Mammary epithelial cell (primary cell): ENCODE measurements at regions of chr2 and their contacts with region 1.

Region 1: GRCh38 chr2:102240640-102241370 is 54.0 kb downstream of the IL1RL2 start:
- DNase-seq: peak; percentile 77
- H3K4me3 ChIP-seq: no peak overlapping the region
- H3K27ac ChIP-seq: peak overlapping the region; percentile 32
- H3K4me1 ChIP-seq: peaks cover 20% of the 10 kb centered on the region
- H3K27me3 ChIP-seq: no peaks in the 10 kb centered on the region
- CTCF ChIP-seq: peak; percentile 91 to 99

Region 2: GRCh38 chr2:101883863-101884262 is 356.9 kb before region 1 on chr2:
- CTCF ChIA-PET with region 1: interaction called, 10 read pairs
- dilution Hi-C with region 1: no loop called
- in situ Hi-C with region 1: no loop called
- intact Hi-C with region 1: loop called (anchors 1 kb)
- DNase-seq: peak; percentile 57
- H3K4me3 ChIP-seq: no peak overlapping the region
- H3K27ac ChIP-seq: no peak overlapping the region
- H3K4me1 ChIP-seq: peaks cover 22% of the 10 kb centered on the region
- H3K27me3 ChIP-seq: no peaks in the 10 kb centered on the region
- CTCF ChIP-seq: peak; percentile 67 to 74

Region 3: DNA sequence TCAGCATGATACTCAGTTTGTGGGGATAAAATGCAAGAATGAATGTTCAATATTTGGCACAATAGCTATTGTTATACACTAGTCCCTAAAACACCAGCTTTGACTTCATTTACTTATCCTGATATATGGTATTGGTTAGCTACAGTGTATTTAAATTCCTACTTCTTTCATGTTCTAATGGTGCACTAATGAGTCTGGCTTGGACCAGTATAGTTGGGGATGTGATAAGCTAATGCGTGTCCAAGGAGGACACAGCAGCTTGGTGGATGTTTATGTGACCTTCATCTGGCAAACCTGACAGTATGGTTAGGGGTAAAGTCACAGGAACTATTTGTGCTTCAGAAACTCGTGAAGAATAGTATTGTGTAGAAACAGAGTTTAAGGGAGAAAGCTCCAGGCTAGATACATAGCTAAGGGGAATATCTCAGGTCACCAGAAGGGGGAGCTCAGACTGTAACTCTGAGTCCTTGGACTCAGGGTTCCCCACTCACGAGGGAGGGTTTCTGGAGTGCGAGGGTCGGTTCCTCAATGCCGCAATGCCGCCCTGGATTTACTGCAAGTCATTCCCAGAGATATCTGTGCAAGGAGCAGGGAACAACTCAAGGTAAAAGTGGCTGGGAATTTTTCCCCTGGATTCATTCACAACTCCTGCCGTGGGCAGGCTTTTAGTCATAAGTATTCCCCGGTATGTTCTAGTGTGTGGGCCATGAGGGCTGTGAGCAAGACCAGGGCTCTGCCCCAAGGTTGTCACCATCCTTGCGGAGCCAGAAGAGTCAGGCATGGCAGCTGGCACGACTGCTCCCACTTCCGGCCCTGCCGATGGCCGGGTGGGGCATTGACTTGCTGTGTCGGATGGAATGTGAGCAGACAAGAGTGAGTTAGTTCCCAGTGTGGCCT is 234.6 kb before region 1 on chr2:
- CTCF ChIA-PET with region 1: interaction called, 4 read pairs
- dilution Hi-C with region 1: no loop called
- in situ Hi-C with region 1: no loop called
- intact Hi-C with region 1: loop called (anchors 1 kb)
- DNase-seq: no peak
- H3K4me3 ChIP-seq: no peak overlapping the region
- H3K27ac ChIP-seq: no peak overlapping the region
- H3K4me1 ChIP-seq: peaks cover 13% of the 10 kb centered on the region
- H3K27me3 ChIP-seq: no peaks in the 10 kb centered on the region
- CTCF ChIP-seq: peak; percentile 70 to 74

Region 4: GRCh38 chr2:102147935-102148334 is 92.9 kb before region 1 on chr2:
- CTCF ChIA-PET with region 1: no interaction called
- dilution Hi-C with region 1: no loop called
- in situ Hi-C with region 1: no loop called
- intact Hi-C with region 1: no loop called
- DNase-seq: peak; percentile 8
- H3K4me3 ChIP-seq: no peak overlapping the region
- H3K27ac ChIP-seq: no peak overlapping the region
- H3K4me1 ChIP-seq: peaks cover 3% of the 10 kb centered on the region
- H3K27me3 ChIP-seq: no peaks in the 10 kb centered on the region
- CTCF ChIP-seq: no peak

Region 5: DNA sequence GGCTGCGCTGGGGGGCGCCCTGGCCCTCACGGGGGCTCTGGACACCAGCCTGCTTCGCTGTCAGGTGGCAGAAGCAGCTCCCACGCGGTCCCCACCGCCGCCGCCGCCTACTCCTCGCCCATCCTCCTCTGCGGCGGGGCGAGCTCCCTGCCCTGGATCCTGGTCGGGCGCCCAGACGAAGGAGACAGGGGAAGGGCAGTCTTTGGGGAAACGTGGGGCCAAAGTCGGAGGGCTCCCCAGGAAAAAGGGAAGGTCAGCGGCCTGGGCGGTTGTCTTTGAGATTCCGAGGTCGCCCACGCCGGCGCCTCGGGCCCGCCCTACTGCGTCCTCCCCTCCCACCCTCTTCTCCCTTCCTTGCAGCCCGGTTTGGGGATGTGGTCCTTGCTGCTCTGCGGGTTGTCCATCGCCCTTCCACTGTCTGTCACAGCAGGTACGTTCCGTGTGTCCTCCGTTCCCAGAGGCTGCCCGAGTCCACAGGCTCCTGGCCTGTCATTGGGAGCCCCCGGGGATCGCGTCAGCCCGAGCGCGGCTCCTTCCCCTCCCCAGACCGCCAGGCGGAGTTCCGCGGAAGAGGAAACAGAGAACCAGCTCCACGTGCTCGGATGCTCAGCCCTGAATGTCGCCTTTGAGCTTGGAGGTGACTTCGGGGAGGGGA is 53.2 kb before region 1 on chr2:
- CTCF ChIA-PET with region 1: interaction called, 7 read pairs
- dilution Hi-C with region 1: no loop called
- in situ Hi-C with region 1: no loop called
- intact Hi-C with region 1: loop called (anchors 1 kb)
- DNase-seq: peak; percentile 16
- H3K4me3 ChIP-seq: peak overlapping the region; percentile 13 to 44 (median 41)
- H3K27ac ChIP-seq: peak overlapping the region; percentile 14
- H3K4me1 ChIP-seq: peaks cover 28% of the 10 kb centered on the region
- H3K27me3 ChIP-seq: no peaks in the 10 kb centered on the region
- CTCF ChIP-seq: no peak

Region 6: GRCh38 chr2:102449370-102449974 is 208.7 kb after region 1 on chr2:
- CTCF ChIA-PET with region 1: interaction called, 21 read pairs
- dilution Hi-C with region 1: no loop called
- in situ Hi-C with region 1: loop called in 1 of 2 experiments (anchors 10 kb)
- intact Hi-C with region 1: no loop called
- DNase-seq: peak; percentile 28
- H3K4me3 ChIP-seq: no peak overlapping the region
- H3K27ac ChIP-seq: no peak overlapping the region
- H3K4me1 ChIP-seq: no peaks in the 10 kb centered on the region
- H3K27me3 ChIP-seq: no peaks in the 10 kb centered on the region
- CTCF ChIP-seq: peak; percentile 57 to 68